OCI-LY7 (cell line): ENCODE measurements at regions of chr4 and their contacts with region 1.

Region 1: GRCh38 chr4:781493-782216 is 44.3 kb downstream of the CPLX1 start:
- DNase-seq: peak; percentile 98
- H3K4me3 ChIP-seq: peak overlapping the region; percentile 97
- H3K27ac ChIP-seq: peak overlapping the region; percentile 66
- H3K4me1 ChIP-seq: peaks cover 38% of the 10 kb centered on the region
- CTCF ChIP-seq: no peak

Region 2: DNA sequence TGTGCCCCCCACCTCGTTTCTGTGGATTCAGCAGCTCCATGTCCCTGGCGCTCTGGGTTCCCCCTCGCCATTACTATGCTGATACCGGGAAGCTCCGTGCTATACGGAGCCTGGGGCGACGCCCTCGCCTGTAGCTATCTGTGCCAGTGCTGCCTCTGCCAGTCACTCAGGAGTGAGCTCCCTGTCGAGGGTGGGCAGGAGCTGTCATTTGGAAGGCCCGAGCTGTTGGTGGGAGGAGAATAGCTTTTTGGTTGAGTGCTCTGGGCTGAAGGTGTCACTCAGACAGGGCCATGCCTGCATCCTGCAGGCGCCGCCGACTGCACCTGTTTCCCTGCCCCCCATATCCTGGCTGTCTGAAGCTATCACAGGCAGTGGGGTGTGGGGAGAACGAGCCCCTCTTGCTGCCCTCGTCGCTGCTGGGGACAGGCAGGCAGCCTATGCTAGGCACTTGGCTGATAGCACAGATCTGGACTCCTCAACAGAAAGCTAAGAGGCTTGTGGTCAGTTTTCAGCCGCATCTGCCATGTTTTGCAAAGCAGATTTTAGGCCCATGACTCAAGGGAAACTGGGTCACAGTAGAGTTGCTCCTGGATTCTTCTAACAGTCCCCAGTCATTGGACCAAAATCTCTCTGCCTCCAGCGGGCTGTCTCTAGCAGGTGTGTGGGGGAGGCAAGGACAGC is 12.4 kb after region 1 on chr4:
- CTCF ChIA-PET with region 1: interaction called, 5 read pairs
- POLR2A ChIA-PET with region 1: interaction called, 39 read pairs
- intact Hi-C with region 1: no loop called
- DNase-seq: peak; percentile 92
- H3K4me3 ChIP-seq: peak overlapping the region; percentile 54
- H3K27ac ChIP-seq: peak overlapping the region; percentile 83
- H3K4me1 ChIP-seq: peaks cover 76% of the 10 kb centered on the region
- CTCF ChIP-seq: no peak

Region 3: DNA sequence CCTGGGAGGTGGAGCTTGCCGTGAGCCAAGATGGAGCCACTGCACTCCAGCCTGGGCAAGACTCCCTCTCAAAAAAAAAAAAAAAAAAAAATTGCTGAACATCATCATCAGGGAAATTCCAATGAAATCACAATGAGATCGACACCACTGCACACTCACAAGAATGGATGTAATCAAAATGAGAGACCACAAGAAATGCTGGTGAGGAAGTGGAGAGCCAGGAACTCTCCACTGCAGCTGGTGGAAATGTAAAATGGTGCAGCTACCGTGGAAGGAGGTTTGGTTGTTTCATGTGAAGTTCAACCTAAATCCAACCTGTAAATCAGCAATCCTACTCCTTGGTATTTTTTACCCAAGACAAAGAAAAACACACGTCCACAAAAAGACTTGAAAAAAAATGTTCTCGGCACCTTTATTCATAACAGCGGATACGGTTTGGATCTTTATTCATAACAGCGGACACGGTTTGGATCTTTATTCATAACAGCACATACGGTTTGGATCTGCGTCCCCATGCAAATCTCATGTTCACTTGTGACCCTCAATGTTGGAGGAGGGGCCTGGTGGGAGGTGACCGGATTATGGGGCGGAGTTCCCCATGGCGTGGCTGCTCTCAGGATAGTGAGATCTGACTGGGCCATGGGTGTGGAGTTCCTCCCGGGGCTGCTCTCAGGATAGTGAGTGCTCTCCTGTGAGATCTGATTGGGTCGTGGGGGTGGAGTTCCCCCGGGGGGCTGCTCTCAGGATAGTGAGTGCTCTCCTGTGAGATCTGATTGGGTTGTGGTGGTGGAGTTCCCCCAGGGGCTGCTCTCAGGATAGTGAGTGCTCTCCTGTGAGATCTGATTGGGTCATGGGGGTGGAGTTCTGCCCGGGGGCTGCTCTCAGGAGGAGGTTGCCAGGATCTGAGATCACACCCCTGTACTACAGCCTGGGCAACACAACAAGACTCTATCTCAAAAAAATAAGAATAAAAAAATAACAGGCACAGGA is 142.7 kb after region 1 on chr4:
- CTCF ChIA-PET with region 1: no interaction called
- POLR2A ChIA-PET with region 1: no interaction called
- intact Hi-C with region 1: loop called (anchors 5 kb)
- DNase-seq: peak; percentile 68
- H3K4me3 ChIP-seq: peak overlapping the region; percentile 32
- H3K27ac ChIP-seq: peak overlapping the region; percentile 90
- H3K4me1 ChIP-seq: peaks cover 58% of the 10 kb centered on the region
- CTCF ChIP-seq: no peak